Heart right ventricle (tissue), 16 donors: ENCODE measurements at regions of chr18 and their contacts with region 1.

Region 1: GRCh38 chr18:21111341-21112139 is at the start of gene ROCK1:
- DNase-seq: peak; percentile 99 to 100
- ATAC-seq: peak; percentile 95 to 98 (median 96)
- H3K4me3 ChIP-seq: peak within 1 kb of the TSS; percentile 85 to 99 (median 96)
- H3K27ac ChIP-seq: peak within 1 kb of the TSS; percentile 87 to 99 (median 98)
- H3K4me1 ChIP-seq: peaks cover 0 to 48% (median 43%) of the 10 kb centered on the region in 9 donors
- H3K27me3 ChIP-seq: no peaks in the 10 kb centered on the region
- CTCF ChIP-seq: no peak
- total RNA-seq, gene ROCK1: 28.6 to 44.1 (median 36.3) TPM

Region 2: GRCh38 chr18:20971886-20972267 is 139.7 kb before region 1 on chr18:
- intact Hi-C with region 1: loop called in 2 of 10 experiments (anchors 10 kb)
- DNase-seq: no peak
- ATAC-seq: no peak
- H3K4me3 ChIP-seq: no peak overlapping the region
- H3K27ac ChIP-seq: no peak overlapping the region
- H3K4me1 ChIP-seq: no peaks in the 10 kb centered on the region
- H3K27me3 ChIP-seq: no peaks in the 10 kb centered on the region
- CTCF ChIP-seq: peak in 8 of 9 donors; percentile 19 to 56 (median 43)

Region 3: GRCh38 chr18:21004726-21005125 is 106.8 kb before region 1 on chr18:
- intact Hi-C with region 1: loop called in 5 of 10 experiments (anchors 5 to 10 kb)
- DNase-seq: peak in 1 of 2 donors; percentile 45
- ATAC-seq: peak; percentile 80 to 97 (median 92)
- H3K4me3 ChIP-seq: no peak overlapping the region
- H3K27ac ChIP-seq: peak overlapping the region in 9 of 10 donors; percentile 23 to 79 (median 50)
- H3K4me1 ChIP-seq: peaks cover 0 to 25% (median 20%) of the 10 kb centered on the region in 9 donors
- H3K27me3 ChIP-seq: no peaks in the 10 kb centered on the region
- CTCF ChIP-seq: no peak

Region 4: GRCh38 chr18:21053127-21053526 is 58.4 kb before region 1 on chr18:
- intact Hi-C with region 1: loop called in 6 of 10 experiments (anchors 5 to 10 kb)
- DNase-seq: no peak
- ATAC-seq: peak in 7 of 8 donors; percentile 28 to 90 (median 48)
- H3K4me3 ChIP-seq: no peak overlapping the region
- H3K27ac ChIP-seq: no peak overlapping the region
- H3K4me1 ChIP-seq: peaks cover 0 to 68% (median 51%) of the 10 kb centered on the region in 9 donors
- H3K27me3 ChIP-seq: no peaks in the 10 kb centered on the region
- CTCF ChIP-seq: no peak

Region 5: DNA sequence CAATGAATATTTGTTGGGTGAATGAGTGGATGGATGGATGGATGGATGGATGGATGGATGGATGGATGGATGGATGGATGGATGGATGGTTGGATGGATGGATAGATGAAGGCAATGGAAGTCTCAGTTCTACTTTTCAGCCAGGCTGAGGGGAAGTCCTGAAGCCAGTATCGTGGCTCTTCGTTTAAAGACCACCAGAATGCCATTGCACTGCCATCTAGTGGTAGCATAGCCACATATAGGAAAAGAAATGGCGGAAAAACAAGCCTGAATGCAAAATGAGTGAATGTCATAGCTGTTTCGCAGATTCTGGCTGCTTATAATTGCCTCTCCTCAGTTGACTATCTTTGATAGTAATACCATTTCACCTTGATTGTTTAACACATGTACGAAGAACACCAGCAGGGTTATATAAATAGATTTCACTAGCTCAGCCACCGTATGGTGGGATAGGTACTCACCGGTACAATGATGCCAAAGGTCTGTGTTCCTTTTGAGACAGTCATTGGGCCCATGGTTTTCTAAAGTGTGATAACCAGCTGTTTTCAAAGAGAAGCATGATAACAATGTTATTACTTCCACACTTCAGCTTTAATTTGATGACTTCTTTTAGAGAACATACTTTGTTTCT is 68.2 kb after region 1 on chr18:
- intact Hi-C with region 1: loop called in 1 of 10 experiments (anchors 10 kb)
- DNase-seq: peak in 1 of 2 donors; percentile 56
- ATAC-seq: peak in 7 of 8 donors; percentile 28 to 79 (median 64)
- H3K4me3 ChIP-seq: no peak overlapping the region
- H3K27ac ChIP-seq: no peak overlapping the region
- H3K4me1 ChIP-seq: peaks cover 0 to 5% (median 0%) of the 10 kb centered on the region in 9 donors
- H3K27me3 ChIP-seq: no peaks in the 10 kb centered on the region
- CTCF ChIP-seq: peak; percentile 55 to 79 (median 71)